ENCODE measurements at regions of chr22 and their contacts with region 1.

Region 1: DNA sequence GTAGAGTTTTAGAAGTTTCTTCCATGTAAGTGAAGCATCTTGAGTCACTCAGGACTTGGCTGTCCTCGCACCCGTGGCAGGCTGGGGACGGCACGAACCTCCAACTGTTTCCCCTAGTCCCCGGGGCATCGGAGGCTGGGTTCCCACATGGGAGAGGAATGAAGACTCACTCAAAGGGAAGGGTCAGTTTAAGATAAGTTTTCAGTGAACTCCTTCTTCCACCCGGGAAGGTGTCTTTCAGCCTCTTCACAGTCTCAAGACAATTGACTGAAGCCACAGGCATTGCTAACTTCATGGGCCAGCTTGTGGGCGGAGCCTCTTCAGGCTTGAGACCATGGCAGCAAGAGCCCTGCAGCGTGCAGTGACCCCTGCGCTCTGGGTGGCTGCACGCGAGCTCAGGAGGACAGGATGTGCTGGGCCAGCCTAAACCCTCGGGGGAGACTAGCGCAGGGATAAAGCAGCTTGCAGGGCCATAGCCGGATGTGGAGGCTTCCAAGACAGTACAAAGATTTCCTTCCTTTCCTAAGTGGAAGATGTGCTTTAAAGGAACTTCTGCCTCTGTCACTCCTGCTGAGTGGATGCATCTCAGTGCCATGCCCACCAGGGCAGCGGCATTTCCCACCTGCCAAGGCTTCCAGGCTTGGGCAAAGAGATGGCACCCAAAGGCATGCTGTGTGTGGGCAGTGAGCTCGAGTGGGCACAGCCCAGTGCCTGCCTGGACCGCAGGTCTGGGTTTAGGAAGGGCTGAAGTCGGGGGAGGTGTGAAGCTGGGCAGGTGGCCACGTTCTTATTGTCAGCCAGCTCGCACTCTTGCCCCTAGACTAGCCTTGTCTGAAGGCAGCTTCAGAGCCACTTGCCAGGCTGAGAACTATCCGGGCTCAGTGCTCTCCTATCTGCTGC is 32.9 kb downstream of the PPIL2 start:
- DNase-seq: no peak
- ATAC-seq: no peak
- H3K4me3 ChIP-seq: no peak overlapping the region
- H3K27ac ChIP-seq: 0 out of 2 replicates have a peak overlapping the region, but pooled peaks have one; percentile 27
- H3K4me1 ChIP-seq: peaks cover 16% of the 10 kb centered on the region
- H3K27me3 ChIP-seq: no peaks in the 10 kb centered on the region
- CTCF ChIP-seq: no peak
- POLR2A ChIP-seq: no peak
- RAD21 ChIP-seq: no peak

Region 2: DNA sequence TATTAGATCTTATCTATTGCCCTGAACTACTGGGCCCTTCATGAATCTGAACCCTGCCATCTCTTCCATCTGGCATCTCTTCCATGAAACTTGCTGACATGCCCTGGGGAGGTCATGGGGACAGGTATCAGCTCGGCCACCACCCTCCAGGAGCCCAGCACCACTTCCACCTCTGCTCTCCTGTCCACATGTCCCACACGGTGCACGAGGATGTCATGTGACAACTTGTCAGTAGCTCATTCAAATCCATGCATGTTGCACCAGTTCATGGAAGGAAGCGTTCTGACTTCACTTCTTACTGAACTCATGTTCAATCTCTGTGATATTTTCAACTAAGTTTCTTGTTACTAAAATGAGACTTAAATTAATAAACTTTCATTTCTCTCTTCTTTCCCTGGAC is 20.3 kb after region 1 on chr22:
- CTCF ChIA-PET with region 1: no interaction called
- POLR2A ChIA-PET with region 1: interaction called, 12 read pairs
- dilution Hi-C with region 1: no loop called
- in situ Hi-C with region 1: no loop called
- intact Hi-C with region 1: no loop called
- DNase-seq: no peak
- ATAC-seq: no peak
- H3K4me3 ChIP-seq: no peak overlapping the region
- H3K27ac ChIP-seq: no peak overlapping the region
- H3K4me1 ChIP-seq: peaks cover 8% of the 10 kb centered on the region
- H3K27me3 ChIP-seq: no peaks in the 10 kb centered on the region
- CTCF ChIP-seq: no peak
- POLR2A ChIP-seq: no peak
- RAD21 ChIP-seq: no peak

Region 3: GRCh38 chr22:21959274-21960074 is 260.8 kb after region 1 on chr22:
- CTCF ChIA-PET with region 1: no interaction called
- POLR2A ChIA-PET with region 1: interaction called, 12 read pairs
- dilution Hi-C with region 1: no loop called
- in situ Hi-C with region 1: no loop called
- intact Hi-C with region 1: no loop called
- DNase-seq: no peak
- ATAC-seq: no peak
- H3K4me3 ChIP-seq: no peak overlapping the region
- H3K27ac ChIP-seq: no peak overlapping the region
- H3K4me1 ChIP-seq: no peaks in the 10 kb centered on the region
- H3K27me3 ChIP-seq: no peaks in the 10 kb centered on the region
- CTCF ChIP-seq: no peak
- POLR2A ChIP-seq: no peak
- RAD21 ChIP-seq: no peak

Measured in IMR-90 (cell line).